Cardiac septum (tissue), 1 donor: ENCODE measurements at regions of chr17 and their contacts with region 1.

Region 1: GRCh38 chr17:58006924-58007780 is at the start of gene SRSF1:
- DNase-seq: peak; percentile 98
- total RNA-seq, gene SRSF1: 105 TPM

Region 2: DNA sequence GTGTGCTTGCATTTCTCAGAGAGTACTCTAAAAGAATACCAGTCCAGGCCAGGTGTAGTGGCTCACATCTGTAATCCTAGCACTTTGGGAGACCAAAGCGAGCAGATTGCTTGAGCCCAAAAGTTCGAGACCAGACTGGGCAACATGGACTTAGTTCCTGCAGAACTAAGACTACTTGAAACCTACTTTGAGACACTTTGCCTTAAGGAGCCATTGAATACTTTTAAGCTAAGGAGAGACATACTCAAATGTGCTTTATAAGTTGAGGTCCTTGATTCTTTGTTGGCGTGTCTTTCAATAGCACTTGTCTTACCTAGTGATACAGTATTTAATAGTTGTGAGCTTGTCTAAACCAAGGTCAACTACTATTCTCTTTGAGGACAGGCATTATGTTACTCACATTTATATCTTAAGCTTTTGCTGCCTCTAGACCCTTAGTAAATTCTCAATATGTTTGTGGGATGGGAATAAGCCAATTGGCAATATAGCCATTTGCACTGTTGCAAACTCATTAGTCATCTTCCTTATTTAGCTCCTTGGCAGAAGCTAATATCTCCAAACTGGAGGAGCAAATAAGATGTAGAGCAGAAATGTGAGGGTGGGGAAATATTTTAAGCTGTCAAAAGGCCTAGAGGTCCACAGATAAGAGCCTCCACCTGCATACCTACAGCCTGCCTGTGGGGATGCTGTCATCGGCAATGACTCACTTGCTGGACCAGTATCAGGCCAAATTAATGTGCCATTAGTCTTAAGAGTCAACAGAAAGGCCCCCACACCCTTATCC is 1013.0 kb before region 1 on chr17:
- intact Hi-C with region 1: loop called (anchors 5 kb)
- DNase-seq: no peak

Region 3: GRCh38 chr17:58046239-58047094 is 39.3 kb after region 1 on chr17:
- intact Hi-C with region 1: loop called (anchors 2 kb)
- DNase-seq: no peak

Region 4: GRCh38 chr17:58082870-58083490 is 75.8 kb after region 1 on chr17 and contains the start of gene DYNLL2:
- intact Hi-C with region 1: loop called (anchors 1 kb)
- DNase-seq: peak; percentile 95
- total RNA-seq, gene DYNLL2: 79.4 TPM